Activated B cell treated with CpG ODN at 0.5 μM for 24 hours (primary cell): ENCODE measurements at regions of chr18 and their contacts with region 1.

Region 1: DNA sequence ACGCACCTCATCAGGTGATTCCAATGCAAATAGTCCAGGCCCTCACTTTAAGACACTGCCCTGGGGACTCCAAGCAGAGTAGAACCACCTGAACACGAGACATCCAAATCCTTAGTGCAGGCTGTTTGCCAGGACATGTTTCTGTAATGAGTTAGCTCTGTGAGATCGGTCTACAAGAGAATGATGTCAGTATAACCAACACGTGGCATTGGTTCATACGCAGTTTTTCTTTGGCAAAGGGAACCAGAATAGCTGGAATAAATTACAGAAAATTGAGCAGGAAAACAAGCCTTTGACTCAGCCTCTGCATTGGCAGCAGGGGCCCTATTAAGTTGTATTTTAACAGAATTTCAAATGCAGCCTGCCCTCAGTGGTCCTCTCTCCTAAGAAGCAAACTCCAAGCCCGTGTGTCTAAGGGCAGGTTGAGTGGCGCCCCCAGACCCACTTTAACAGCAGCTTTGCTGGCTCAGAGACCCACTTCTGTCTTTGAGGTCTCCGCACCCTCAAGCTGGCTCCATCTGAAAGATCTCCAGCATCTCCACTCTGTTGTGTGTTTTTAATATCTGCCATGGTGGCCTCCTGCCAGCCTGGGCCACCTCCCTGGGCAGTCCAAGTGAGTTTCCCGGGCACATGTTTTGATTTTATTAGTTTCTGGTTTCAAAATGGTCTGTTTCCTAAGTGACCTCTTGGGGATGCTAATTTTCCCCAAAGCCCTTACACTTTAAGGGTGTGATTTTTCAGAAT is 61.3 kb downstream of the ALPK2 start:
- DNase-seq: no peak
- ATAC-seq: no peak
- H3K4me3 Mint-ChIP-seq: no peak overlapping the region
- H3K27ac Mint-ChIP-seq: no peak overlapping the region
- H3K4me1 Mint-ChIP-seq: peaks cover 33% of the 10 kb centered on the region
- H3K27me3 Mint-ChIP-seq: no peaks in the 10 kb centered on the region
- CTCF ChIP-seq: no peak

Region 2: DNA sequence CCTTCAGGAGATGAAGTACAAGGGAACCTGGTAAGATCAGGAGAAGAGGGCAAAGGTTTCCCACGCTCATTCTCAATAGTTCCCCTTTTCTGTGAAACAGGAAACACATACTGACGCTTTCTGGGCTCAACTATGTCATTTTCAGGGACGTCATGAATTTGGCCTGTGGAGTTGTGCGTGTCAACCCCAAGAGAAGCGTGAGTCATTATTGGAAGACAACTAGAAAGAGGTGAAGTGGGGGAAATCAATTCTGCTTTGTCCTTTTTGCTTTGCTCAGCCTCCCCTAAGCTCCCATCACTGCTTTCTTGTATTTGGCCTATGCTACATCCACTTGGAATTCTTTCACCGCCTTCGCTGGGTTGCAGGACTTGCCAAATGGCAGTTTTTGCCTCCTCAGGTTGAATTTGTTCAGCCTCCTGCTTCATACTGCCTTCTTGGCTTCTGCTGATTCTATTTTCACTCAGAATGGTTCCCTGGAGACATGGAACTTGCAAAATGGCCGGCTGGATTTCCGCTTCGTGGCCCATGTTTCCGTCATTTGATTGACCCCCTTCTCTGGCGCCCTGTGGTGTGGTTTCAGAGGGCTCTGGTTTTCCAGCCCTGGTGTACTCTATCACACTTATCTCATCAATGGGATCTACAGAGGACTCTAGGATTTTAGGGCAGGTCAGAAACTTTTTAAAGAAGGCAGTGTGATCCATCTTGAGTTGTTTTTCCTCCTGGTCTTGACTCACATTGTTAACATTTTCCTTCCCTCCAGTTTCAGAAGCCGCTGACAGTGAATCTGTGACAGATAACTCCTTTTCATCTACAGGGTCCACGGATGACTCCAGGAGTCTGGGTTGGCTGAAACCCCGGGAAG is 32.1 kb before region 1 on chr18:
- CTCF ChIA-PET with region 1: no interaction called
- POLR2A ChIA-PET with region 1: no interaction called
- intact Hi-C with region 1: loop called (anchors 1 kb)
- DNase-seq: no peak
- ATAC-seq: peak; percentile 78
- H3K4me3 Mint-ChIP-seq: peak overlapping the region; percentile 63
- H3K27ac Mint-ChIP-seq: peak overlapping the region; percentile 81
- H3K4me1 Mint-ChIP-seq: peaks cover 68% of the 10 kb centered on the region
- H3K27me3 Mint-ChIP-seq: no peaks in the 10 kb centered on the region
- CTCF ChIP-seq: no peak

Region 3: DNA sequence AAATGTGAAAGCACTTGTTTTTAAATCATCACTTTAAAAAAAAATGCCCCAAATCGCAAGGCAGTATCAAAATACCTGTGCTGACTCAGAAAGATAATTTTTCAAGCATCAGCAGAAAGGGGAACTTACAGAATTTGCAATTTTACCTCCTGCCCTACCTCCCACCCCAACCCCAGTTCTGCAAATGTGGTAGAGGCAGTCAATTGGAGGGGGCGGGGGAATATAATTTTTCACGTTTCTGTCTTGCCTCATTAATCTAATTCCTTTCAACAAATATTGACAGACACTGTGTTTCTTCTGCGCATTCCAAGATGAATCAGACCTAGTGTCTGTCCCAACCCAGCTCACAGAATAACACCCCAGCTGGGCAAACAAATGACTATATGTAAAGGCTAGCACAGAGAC is 15.6 kb before region 1 on chr18:
- CTCF ChIA-PET with region 1: no interaction called
- POLR2A ChIA-PET with region 1: interaction called, 3 read pairs
- intact Hi-C with region 1: loop called (anchors 1 kb)
- DNase-seq: no peak
- ATAC-seq: peak; percentile 84
- H3K4me3 Mint-ChIP-seq: peak overlapping the region; percentile 45
- H3K27ac Mint-ChIP-seq: peak overlapping the region; percentile 84
- H3K4me1 Mint-ChIP-seq: peaks cover 54% of the 10 kb centered on the region
- H3K27me3 Mint-ChIP-seq: no peaks in the 10 kb centered on the region
- CTCF ChIP-seq: no peak

Region 4: DNA sequence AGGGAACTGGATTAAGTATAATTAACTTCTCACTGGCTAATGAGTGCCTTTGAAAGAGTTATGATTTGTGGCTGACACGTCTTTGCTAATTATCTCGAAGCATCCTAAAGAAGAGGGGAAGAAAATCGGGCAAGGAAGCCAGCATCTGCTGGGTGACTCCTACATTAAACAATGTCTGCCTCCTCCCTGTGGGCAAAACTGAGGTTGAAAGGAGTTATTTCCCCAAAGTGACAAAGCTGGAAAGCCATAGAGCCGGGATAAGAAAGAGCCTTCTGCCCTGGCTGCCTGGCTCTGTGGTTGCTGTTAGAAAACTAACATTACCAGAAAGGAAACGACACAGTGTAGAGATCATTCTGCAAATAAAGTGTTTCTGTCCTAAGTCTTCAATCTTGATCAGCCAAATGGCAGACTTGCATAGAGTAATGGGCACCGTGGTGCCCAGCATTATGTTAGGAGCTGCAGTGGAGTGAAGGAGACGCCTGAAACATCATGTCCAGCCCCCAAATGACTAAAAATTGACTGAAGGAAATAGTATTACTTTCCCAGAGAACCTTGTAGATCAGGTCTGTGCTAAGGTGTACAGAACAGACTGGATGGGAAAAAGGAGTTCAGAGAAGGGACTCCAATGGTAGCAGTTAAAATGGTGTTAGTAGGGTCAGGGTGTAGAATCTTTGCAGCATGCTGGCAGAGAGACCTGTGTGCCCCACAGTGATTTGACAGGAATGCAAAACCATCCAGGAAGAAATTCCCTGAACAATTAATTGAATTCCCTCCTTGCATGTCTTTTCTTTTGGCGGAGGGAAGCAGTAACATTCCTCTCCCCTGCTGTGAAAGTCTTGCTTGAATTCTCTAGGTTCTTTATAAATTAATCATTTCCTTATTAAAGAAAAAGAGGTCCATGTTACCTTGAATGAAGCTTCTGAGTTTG is 16.8 kb after region 1 on chr18:
- CTCF ChIA-PET with region 1: no interaction called
- POLR2A ChIA-PET with region 1: interaction called, 19 read pairs
- intact Hi-C with region 1: no loop called
- DNase-seq: no peak
- ATAC-seq: no peak
- H3K4me3 Mint-ChIP-seq: no peak overlapping the region
- H3K27ac Mint-ChIP-seq: no peak overlapping the region
- H3K4me1 Mint-ChIP-seq: peaks cover 10% of the 10 kb centered on the region
- H3K27me3 Mint-ChIP-seq: no peaks in the 10 kb centered on the region
- CTCF ChIP-seq: no peak

Region 5: DNA sequence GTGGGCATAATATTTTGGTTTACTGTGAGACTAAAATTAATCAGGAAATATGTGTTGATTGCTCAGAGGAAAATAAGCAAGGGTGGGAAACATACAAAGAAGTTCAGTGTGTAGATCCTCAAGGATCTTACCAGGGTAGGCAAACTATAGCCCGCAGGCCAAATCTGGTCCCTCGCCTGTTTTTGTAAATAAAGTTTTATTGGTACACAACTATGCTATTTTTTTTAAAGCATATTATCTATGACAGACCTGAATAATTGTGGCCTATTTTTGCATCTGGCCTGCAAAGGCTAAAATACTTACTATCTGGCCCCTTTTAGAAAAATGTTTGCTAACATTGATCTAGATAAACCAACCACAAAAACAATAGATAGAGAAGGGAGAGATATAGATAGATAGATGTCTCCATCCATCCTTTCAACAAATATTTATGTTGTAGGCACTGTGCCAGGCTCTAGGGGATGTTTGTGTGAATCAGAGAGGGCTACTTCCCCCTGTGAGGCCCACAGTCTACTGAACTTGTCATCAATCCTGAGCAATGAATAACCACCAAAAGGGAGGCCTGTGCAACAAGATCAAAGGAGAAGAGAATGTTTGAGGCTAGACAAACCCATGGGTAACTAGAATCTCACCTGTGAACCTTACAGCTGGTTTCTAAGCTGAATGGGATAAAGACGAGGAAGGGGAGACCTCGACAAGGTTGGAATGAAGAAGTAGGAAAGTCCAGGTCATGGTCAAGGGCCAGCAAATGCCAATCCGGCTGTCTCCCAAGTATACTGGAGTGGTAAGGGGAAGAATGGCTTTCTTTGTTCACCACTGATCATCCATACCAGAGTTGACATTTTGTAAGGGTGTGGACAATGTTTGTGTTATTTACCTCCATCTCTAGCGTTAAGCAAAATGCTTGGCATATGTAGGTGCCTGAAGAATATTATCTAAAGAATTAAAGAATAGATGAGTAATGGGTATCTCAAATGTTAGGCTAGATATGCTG is 37.7 kb after region 1 on chr18:
- CTCF ChIA-PET with region 1: no interaction called
- POLR2A ChIA-PET with region 1: no interaction called
- intact Hi-C with region 1: loop called (anchors 5 kb)
- DNase-seq: no peak
- ATAC-seq: peak; percentile 51
- H3K4me3 Mint-ChIP-seq: no peak overlapping the region
- H3K27ac Mint-ChIP-seq: no peak overlapping the region
- H3K4me1 Mint-ChIP-seq: peaks cover 31% of the 10 kb centered on the region
- H3K27me3 Mint-ChIP-seq: no peaks in the 10 kb centered on the region
- CTCF ChIP-seq: no peak